ENCODE measurements at regions of chr7 and their contacts with region 1.

Region 1: DNA sequence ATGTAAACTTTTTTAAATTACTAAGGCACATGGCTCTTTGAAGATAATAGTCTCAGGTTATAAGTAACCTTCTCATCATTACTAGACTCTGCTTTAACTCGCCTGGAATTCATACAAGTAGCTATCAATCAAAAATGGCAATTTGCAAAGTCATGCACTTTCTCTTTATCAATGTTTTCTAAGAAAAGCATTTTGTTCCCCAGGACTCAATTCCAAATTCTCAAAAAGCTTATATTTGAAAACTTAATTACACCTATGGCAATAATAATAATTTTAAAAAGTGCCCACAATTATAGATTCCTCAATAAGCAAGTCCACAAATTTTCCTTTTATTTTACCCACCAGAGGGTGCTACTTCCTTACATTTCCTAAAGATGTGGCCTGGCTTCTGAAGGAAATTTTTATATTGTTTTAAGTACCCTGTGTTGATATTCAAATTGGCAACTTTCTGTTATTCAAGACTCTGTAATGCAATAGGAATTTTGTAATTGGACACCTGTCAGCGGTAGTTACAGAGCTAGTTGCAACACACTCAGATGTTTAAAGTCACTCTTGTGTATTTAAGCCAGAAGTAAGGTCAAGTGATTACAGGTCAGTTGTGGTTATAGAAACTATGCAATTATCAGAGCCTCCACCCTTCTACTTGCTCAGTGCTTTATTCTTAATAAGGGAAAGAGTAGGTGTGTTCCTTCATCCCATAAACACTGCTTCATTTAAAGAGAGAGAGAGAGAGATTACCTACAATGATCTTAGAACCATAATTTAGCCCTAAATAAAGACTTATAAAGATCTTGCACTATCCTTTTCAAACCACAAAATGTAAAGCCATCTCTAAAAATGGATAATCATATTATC is 47.1 kb upstream of the HYAL4 start:
- DNase-seq: no peak
- ATAC-seq: peak; percentile 93 to 96
- H3K4me3 ChIP-seq: peak overlapping the region in 1 of 4 donors; percentile 28
- H3K27ac ChIP-seq: peak overlapping the region; percentile 44 to 83 (median 62)
- H3K4me1 ChIP-seq: peaks cover 0 to 15% of the 10 kb centered on the region in 2 donors
- H3K27me3 ChIP-seq: no peaks in the 10 kb centered on the region
- CTCF ChIP-seq: peak in 4 of 5 experiments; percentile 46 to 84 (median 66)
- POLR2A ChIP-seq: no peak

Region 2: DNA sequence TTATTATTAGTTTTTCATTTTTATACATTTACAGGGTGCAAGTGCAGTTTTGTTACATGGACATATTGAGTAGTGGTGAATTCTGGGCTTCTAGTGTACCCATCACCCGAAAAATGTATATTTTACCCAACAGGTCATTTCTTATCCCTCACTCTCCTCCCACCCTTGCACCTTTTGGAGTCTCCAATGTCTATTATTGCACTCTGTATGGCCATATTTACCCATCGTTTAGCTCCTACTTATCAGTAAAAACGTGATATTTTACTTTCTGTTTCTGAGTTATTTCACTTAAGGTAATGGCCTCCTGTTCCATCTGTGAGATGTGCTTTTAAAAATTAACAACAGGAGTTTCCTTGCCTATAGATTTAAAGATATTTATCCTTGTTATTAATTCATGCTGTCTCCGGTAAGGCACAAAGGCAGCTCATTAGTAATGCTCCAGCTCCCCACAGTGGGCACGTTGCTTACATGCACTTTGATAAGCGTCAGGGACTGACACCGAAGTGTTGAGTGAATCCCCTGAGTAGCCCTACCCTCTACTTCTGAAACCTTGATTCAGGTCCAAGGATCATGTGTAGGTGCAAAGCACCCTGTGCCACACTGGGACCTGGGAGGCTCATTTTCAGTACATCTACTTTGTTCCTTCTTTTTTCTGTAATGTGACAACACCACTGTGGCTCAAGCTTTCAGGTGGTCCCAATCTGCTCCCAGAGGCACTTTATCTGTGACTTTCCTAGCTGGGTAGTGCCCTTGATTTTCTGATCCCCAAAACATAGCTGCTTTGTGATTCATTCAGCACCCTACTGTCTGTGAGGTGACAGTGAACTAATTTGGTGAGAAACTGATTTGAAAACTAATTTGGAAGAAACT is 74.3 kb after region 1 on chr7:
- in situ Hi-C with region 1: loop called in 2 of 4 experiments (anchors 10 kb)
- intact Hi-C with region 1: loop called (anchors 2 kb)
- DNase-seq: peak; percentile 19 to 41
- ATAC-seq: peak; percentile 89 to 90
- H3K4me3 ChIP-seq: no peak overlapping the region
- H3K27ac ChIP-seq: peak overlapping the region in 1 of 4 donors; percentile 63
- H3K4me1 ChIP-seq: peaks cover 9 to 14% of the 10 kb centered on the region in 2 donors
- H3K27me3 ChIP-seq: no peaks in the 10 kb centered on the region
- CTCF ChIP-seq: peak; percentile 21 to 56 (median 48)
- POLR2A ChIP-seq: no peak

Region 3: GRCh38 chr7:123916240-123916724 is 118.4 kb after region 1 on chr7:
- in situ Hi-C with region 1: no loop called
- intact Hi-C with region 1: loop called (anchors 5 kb)
- DNase-seq: no peak
- ATAC-seq: no peak
- H3K4me3 ChIP-seq: no peak overlapping the region
- H3K27ac ChIP-seq: no peak overlapping the region
- H3K4me1 ChIP-seq: no peaks in the 10 kb centered on the region
- H3K27me3 ChIP-seq: no peaks in the 10 kb centered on the region
- CTCF ChIP-seq: no peak
- POLR2A ChIP-seq: no peak